Aorta (tissue), 5 donors: ENCODE measurements at regions of chr7 and their contacts with region 1.

Region 1: DNA sequence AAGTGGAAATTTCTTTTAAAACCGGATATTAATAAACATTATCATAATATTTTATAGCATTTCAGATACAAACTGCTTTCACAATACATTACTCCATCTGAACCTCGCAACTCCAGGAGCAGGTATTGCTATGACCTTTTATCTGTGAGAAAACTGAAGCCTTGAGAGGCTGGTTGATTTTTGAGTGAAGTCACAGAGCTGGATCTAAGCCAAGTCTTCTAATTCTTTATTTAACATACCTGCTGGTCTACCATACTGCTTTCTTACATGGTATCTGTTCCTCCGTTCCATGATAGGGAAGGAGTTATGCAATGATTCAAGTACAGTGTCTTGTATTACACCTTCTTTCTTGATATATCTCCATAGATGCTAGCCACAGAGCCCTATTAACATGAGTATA is 37.4 kb upstream of the ITGB8 start:
- DNase-seq: no peak
- ATAC-seq: no peak
- H3K4me3 ChIP-seq: no peak overlapping the region
- H3K27ac ChIP-seq: no peak overlapping the region
- H3K4me1 ChIP-seq: no peaks in the 10 kb centered on the region
- H3K27me3 ChIP-seq: no peaks in the 10 kb centered on the region

Region 2: GRCh38 chr7:20329389-20330239 is 36.3 kb after region 1 on chr7:
- intact Hi-C with region 1: loop called in 1 of 2 experiments (anchors 2 kb)
- DNase-seq: peak; percentile 70 to 83
- ATAC-seq: peak; percentile 71
- H3K4me3 ChIP-seq: peak overlapping the region; percentile 59 to 83
- H3K27ac ChIP-seq: peak overlapping the region; percentile 12 to 97
- H3K4me1 ChIP-seq: no peaks in the 10 kb centered on the region
- H3K27me3 ChIP-seq: no peaks in the 10 kb centered on the region